ENCODE measurements at regions of chr10 and their contacts with region 1.

Region 1: GRCh38 chr10:103685880-103686669 is 169.3 kb downstream of the SH3PXD2A start:
- DNase-seq: peak; percentile 59 to 73
- ATAC-seq: peak; percentile 85
- H3K4me3 ChIP-seq: no peak overlapping the region
- H3K27ac ChIP-seq: peak overlapping the region in 1 of 4 donors; percentile 34
- H3K4me1 ChIP-seq: peaks cover 5 to 10% of the 10 kb centered on the region in 2 donors
- H3K27me3 ChIP-seq: no peaks in the 10 kb centered on the region
- CTCF ChIP-seq: peak; percentile 92 to 99 (median 97)
- POLR2A ChIP-seq: no peak

Region 2: GRCh38 chr10:103416436-103417147 is 269.5 kb before region 1 on chr10:
- in situ Hi-C with region 1: loop called in 3 of 4 experiments (anchors 25 kb)
- intact Hi-C with region 1: no loop called
- DNase-seq: peak in 1 of 2 donors; percentile 51
- ATAC-seq: peak; percentile 33 to 60
- H3K4me3 ChIP-seq: no peak overlapping the region
- H3K27ac ChIP-seq: no peak overlapping the region
- H3K4me1 ChIP-seq: no peaks in the 10 kb centered on the region
- H3K27me3 ChIP-seq: no peaks in the 10 kb centered on the region
- CTCF ChIP-seq: peak; percentile 23 to 71 (median 58)
- POLR2A ChIP-seq: no peak

Region 3: GRCh38 chr10:103598654-103599115 is 87.4 kb before region 1 on chr10:
- in situ Hi-C with region 1: loop called (anchors 5 kb)
- intact Hi-C with region 1: loop called (anchors 1 kb)
- DNase-seq: peak; percentile 36 to 65
- ATAC-seq: peak; percentile 66 to 91
- H3K4me3 ChIP-seq: no peak overlapping the region
- H3K27ac ChIP-seq: no peak overlapping the region
- H3K4me1 ChIP-seq: peaks cover 11 to 20% of the 10 kb centered on the region in 2 donors
- H3K27me3 ChIP-seq: no peaks in the 10 kb centered on the region
- CTCF ChIP-seq: peak; percentile 64 to 85 (median 81)
- POLR2A ChIP-seq: no peak

Region 4: DNA sequence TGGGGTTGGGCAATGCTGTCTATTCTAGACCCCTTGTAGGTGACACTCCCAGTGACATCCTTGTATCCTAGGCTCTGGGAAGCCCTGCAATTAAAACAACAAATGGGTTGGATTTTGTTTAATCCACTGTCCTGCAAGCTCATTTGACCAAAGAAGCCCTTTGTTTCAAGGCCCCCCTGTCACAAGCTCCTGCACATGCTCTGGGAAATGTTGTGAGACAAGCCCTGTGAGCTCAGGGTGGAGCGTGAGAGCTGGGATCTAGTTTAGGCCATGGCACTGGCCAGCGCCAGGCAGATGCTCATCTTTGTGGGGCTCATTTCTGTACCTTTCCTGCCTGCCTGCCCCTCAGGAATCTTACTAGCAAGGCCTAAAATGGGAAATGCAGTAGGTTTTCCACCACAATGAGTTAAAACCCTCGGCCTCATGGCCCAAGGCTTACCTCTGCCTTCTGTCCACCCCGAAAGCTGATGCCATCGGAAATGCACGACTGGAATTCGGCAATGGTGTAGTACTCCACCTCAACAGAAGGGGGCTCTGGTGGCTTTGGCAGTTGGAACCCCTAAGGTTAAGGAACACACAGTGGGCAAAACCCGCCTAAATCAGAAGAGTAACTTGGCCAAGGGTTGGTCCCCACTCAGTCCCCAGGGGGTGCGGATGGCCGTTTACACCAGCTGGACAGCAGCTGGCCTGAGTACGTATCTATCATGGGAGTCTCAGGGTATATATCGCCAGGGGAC is 80.5 kb before region 1 on chr10:
- in situ Hi-C with region 1: loop called (anchors 5 kb)
- intact Hi-C with region 1: loop called (anchors 1 kb)
- DNase-seq: peak; percentile 50 to 72
- ATAC-seq: peak; percentile 56 to 92
- H3K4me3 ChIP-seq: no peak overlapping the region
- H3K27ac ChIP-seq: no peak overlapping the region
- H3K4me1 ChIP-seq: peaks cover 4 to 6% of the 10 kb centered on the region in 2 donors
- H3K27me3 ChIP-seq: no peaks in the 10 kb centered on the region
- CTCF ChIP-seq: peak; percentile 79 to 92 (median 90)
- POLR2A ChIP-seq: no peak